Left cardiac atrium (tissue), 4 donors: ENCODE measurements at regions of chr13 and their contacts with region 1.

Region 1: GRCh38 chr13:21060987-21061763 is at the start of gene LATS2:
- DNase-seq: peak; percentile 97
- ATAC-seq: peak; percentile 95 to 97
- total RNA-seq, gene LATS2: 19.3 to 30.9 TPM

Region 2: DNA sequence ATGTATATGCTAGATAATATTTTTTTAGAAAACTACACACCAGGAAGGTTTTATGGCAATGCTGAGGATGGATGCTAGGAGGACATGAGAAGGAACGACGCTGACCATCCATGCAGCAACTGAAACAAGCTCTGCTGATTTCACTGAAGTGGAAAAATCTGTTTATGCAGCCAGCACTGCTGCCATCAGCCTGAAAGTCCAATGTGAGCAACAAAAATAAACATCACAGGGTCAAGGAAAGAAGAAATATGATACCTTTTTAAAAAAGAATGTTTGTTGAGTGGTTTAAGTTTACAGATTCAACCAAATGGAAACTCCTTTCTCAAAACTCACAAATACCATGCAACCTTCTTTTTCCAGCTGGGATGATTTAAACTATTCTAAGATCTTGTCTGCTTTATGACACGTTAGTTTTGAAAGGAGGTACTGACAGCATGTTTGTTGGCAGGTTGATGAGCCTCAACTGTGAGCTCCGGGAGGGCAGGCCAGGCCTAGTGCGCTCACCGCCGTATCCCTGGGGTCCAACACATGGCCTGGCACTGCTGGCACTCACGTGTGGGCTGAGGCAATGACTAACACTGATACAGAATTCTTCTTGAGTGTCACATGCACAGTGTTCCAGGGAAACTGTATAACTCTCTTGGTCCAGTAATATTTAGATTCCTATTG is 46.5 kb before region 1 on chr13:
- intact Hi-C with region 1: loop called in 1 of 2 experiments (anchors 5 kb)
- DNase-seq: peak; percentile 69
- ATAC-seq: peak; percentile 66 to 80